ENCODE measurements at regions of chr12 and their contacts with region 1.

Region 1: GRCh38 chr12:113591480-113591974 is 119.9 kb upstream of the LHX5 start:
- DNase-seq: no peak
- H3K4me3 ChIP-seq: no peak overlapping the region
- H3K27ac ChIP-seq: no peak overlapping the region
- H3K4me1 ChIP-seq: no peaks in the 10 kb centered on the region
- H3K27me3 ChIP-seq: no peaks in the 10 kb centered on the region
- CTCF ChIP-seq: no peak
- EP300 ChIP-seq: no peak
- POLR2A ChIP-seq: no peak

Region 2: DNA sequence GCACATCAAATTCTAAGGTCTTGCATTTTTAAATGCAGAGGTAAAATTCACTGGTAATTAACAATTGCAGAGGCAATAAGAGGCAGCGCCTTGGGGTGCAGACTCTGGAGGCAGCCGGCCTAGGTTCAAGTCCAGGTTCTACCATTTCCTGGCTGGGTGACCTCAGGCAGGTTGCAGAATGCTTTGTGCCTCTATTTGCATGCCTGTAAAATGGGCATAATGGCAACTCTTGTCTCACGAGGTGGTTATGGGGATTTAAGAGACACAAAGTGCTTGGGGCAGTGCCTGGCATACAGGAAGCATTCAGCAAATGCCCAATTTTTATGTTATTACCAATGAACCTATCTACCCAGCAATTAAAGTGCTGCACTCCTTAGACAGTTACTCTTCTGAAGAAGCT is 60.1 kb after region 1 on chr12:
- intact Hi-C with region 1: loop called in 1 of 4 experiments (anchors 2 kb)
- DNase-seq: no peak
- H3K4me3 ChIP-seq: no peak overlapping the region
- H3K27ac ChIP-seq: no peak overlapping the region
- H3K4me1 ChIP-seq: no peaks in the 10 kb centered on the region
- H3K27me3 ChIP-seq: no peaks in the 10 kb centered on the region
- CTCF ChIP-seq: no peak
- EP300 ChIP-seq: no peak
- POLR2A ChIP-seq: no peak